ENCODE measurements at regions of chr20 and their contacts with region 1.

Region 1: GRCh38 chr20:10553326-10553984 is 118.3 kb downstream of the SLX4IP start:
- DNase-seq: peak; percentile 88

Region 2: DNA sequence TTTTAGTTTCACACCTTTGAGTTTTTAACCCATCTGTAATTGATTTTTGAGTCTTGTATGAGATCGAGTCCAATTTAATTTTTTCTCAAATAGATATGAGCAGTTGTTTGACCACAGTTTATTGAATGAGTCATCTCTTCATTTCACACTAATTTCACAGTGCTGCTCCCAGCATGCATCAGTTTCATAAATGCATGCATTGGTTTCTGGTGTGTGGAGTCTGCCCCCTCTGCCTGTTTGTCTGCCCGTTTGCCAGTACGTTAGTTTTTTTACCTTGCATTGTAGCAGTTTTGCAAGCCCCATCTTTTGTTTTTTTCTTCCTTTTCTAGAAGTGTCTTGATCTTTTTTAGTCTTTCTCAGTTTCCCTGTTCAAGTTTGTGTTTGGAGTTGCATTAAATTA is 106.4 kb before region 1 on chr20:
- intact Hi-C with region 1: no loop called
- DNase-seq: no peak

Region 3: DNA sequence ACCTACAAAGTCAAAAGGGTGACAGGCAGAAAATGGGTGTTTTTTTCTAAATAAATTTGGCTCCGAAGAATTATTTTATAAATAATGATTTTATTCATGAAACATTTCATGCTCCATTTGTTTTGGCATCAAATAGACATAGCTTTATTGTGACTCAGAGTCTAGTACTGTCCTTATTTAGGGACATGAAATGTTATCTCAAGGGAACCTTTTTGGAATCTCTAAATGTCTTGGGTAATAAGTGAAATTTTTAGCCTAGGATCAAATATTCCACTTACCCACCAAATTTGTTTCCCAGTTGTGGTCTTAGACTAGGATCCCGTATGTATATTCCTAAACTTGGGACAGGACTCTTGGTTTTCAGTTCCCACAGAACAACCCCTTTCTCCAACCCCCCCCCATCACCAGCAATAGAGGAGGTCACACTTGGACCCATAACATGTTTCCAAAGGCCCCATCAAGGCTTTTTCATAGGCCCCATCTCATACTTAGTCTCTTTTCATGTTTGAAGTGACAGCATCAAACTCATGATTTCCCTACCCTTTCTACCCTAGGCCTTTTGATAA is 38.6 kb after region 1 on chr20:
- intact Hi-C with region 1: loop called in 1 of 2 experiments (anchors 1 kb)
- DNase-seq: no peak

Region 4: GRCh38 chr20:10667077-10667401 is 113.6 kb after region 1 on chr20:
- intact Hi-C with region 1: loop called (anchors 2 to 10 kb)
- DNase-seq: no peak

Region 5: DNA sequence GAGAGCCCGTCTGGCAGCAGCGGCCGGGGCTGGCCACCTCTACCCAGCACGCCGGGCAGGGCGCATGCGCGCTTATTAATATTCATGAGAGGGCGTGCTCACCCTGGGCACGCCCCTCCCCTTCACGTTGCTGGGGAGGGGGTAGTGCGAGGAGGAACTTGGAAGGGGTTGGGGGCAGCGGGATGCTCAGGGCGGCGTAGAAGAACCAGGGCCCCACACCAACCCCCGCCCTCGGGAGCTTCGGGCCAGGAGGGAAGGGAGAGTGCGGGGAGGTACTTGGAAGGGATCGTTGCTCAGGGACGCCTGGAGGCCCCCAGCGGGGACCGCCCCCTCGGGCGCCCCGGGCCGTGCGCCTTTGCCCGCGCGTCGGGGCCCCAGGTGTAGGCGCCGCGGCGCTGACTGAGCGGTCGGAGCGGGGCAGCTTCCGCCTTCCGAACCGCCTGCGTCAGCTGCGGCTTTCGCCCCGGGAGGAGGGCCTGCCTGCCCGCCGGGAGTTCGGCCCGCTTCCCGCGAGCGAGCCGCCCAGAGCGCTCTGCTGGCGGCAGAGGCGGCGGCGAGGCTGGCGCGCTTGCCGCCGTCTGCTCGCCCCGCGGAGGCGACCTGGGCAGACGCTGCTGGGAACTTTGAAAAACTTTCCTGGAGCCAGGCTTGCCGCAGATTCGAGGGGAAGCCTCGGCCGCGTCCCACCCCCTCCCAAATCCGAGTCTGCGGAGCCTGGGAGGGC is 120.7 kb after region 1 on chr20 and contains the start of gene JAG1:
- intact Hi-C with region 1: loop called (anchors 2 to 10 kb)
- DNase-seq: peak; percentile 99
- total RNA-seq, gene JAG1: 68.5 to 84.2 TPM

Region 6: GRCh38 chr20:11274141-11274594 is 720.7 kb after region 1 on chr20:
- intact Hi-C with region 1: loop called (anchors 5 kb)
- DNase-seq: no peak